HepG2 (cell line): ENCODE measurements at regions of chr14 and their contacts with region 1.

Region 1: DNA sequence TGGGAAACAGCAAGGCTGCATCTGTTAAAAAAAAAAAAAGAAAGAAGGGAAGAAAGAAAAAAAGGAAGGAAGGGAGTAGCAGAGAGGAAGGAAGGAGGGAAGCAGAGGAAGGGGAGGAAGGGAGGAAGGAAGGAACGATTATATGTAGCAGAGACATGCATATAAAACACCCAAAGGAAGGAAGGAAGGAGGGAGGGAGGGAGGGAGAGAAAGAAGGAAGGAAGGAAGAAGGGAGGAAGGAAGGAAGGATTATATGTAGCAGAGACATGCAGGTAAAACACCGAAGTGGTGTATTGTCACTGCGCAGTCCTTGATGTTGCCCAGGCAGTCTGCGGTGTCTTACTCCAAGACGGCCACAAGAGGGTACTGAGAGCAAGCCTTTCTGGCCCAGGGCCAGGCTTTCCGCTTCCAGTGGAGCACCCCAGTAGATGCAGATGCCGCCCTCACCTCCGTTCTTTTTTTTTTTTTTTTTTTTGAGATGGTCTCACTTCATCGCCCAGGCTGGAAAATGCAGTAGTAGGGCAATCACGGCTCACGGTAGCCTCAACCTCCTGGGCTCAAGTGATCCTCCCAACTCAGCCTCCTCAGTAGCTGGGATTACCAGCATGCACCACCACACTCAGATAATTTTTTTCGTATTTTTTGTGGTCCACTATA is 5.8 kb upstream of the LBHD2 start:
- DNase-seq: peak; percentile 73
- ATAC-seq: peak; percentile 34
- H3K4me3 ChIP-seq: no peak overlapping the region
- H3K27ac ChIP-seq: no peak overlapping the region
- H3K4me1 ChIP-seq: peaks cover 37% of the 10 kb centered on the region
- H3K27me3 ChIP-seq: peaks cover 2 to 33% of the 10 kb centered on the region in 2 experiments; a peak in 3 of 5 replicates
- CTCF ChIP-seq: peak; percentile 92
- EP300 ChIP-seq: no peak
- POLR2A ChIP-seq: no peak
- RAD21 ChIP-seq: peak; percentile 57; the same call in 1 of the 2 replicates

Region 2: DNA sequence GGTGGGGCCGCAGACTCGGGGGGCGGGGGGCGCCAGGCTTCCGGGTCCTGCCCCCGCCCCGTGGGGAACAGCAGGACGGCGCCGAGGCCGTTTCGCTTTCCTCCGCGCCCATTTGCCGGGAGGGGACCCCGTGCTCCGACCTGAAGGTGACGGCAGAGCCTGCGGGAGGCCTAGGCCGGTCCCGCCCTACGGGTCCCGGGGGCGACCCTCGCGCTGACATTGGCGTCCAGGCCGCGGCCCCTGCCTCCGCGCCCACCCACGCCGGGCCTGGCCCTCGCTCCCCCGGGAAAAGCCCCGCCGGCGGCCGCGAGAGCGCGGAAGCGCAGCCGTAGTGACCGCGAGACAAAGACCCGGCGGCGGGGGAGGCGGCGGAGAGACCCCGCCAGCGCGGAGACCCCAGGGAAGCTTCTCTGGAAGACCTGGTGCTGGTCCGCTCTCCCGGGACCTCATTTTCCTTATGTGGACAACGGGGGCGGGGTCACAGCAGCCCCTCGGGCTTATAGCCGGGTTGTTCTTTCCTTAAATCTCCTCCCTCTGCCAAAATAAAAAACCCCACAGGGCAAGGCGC is 522.9 kb before region 1 on chr14:
- CTCF ChIA-PET with region 1: no interaction called
- POLR2A ChIA-PET with region 1: no interaction called
- in situ Hi-C with region 1: no loop called
- intact Hi-C with region 1: no loop called
- DNase-seq: no peak
- ATAC-seq: no peak
- H3K4me3 ChIP-seq: no peak overlapping the region
- H3K27ac ChIP-seq: no peak overlapping the region
- H3K4me1 ChIP-seq: peaks cover 26% of the 10 kb centered on the region
- H3K27me3 ChIP-seq: no peaks in the 10 kb centered on the region; a peak in 1 of 5 replicates
- CTCF ChIP-seq: no peak
- EP300 ChIP-seq: no peak
- POLR2A ChIP-seq: no peak
- RAD21 ChIP-seq: no peak

Region 3: GRCh38 chr14:103057365-103058096 is 20.7 kb before region 1 on chr14 and contains the start of gene CDC42BPB:
- CTCF ChIA-PET with region 1: no interaction called
- POLR2A ChIA-PET with region 1: no interaction called
- in situ Hi-C with region 1: no loop called
- intact Hi-C with region 1: no loop called
- DNase-seq: peak; percentile 66
- ATAC-seq: peak; percentile 96
- H3K4me3 ChIP-seq: peak within 1 kb of the TSS; percentile 77 to 98 (median 91)
- H3K27ac ChIP-seq: peak within 1 kb of the TSS; percentile 63
- H3K4me1 ChIP-seq: peaks cover 42% of the 10 kb centered on the region
- H3K27me3 ChIP-seq: no peaks in the 10 kb centered on the region
- CTCF ChIP-seq: no peak
- EP300 ChIP-seq: no peak
- POLR2A ChIP-seq: peak in 1 of 2 experiments; percentile 49; a peak in 1 of 4 replicates
- RAD21 ChIP-seq: no peak
- total RNA-seq, gene CDC42BPB: 19.7 and 20.2 TPM in 2 replicates

Region 4: DNA sequence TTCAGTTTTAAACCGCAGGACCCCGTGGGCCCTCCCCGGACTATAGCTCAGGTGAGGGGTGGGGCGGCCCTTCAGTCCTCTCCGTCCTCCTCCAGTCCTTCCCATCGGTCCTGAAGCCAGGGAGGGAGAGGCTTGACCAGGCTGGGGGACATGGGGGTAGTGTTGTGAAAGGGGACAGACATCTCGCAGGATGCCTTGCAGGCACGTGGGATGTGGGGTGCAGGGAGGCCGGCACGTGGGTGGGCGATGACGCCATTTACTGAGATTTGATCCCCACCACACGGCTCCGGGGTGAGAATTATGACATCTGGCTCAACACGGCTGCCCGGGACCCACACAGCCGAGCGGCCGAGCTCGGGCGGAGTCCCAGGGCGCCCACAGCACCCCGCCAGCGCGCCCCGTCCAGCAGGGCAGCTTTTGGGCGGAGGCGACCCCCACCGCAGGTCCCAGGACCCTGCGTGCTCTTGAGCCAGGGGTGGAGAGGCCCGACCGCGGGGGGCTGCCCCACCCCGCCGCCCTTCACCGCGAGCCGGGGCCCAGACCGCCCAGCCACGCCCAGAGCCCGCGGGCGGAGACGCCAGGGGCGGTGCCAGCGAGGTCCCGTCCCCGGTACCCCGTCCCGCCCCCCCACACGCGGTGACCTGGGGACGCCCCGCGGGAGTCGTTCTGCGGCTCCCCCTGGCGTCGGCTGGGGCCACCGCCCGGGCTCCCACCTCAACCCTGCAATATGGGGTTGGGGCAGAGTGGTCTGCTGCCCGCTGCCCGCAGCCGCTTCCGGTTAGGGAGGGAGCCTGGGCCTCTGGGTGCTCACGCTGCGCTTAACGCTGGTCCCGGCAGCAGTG is 13.0 kb after region 1 on chr14:
- CTCF ChIA-PET with region 1: interaction called, 4 read pairs
- POLR2A ChIA-PET with region 1: interaction called, 11 read pairs
- in situ Hi-C with region 1: no loop called
- intact Hi-C with region 1: no loop called
- DNase-seq: no peak
- ATAC-seq: peak; percentile 12
- H3K4me3 ChIP-seq: peak overlapping the region in 2 of 3 experiments; percentile 3 to 40; a peak in 1 of 6 replicates
- H3K27ac ChIP-seq: no peak overlapping the region
- H3K4me1 ChIP-seq: peaks cover 89% of the 10 kb centered on the region
- H3K27me3 ChIP-seq: peaks cover 0 to 8% of the 10 kb centered on the region in 2 experiments; a peak in 3 of 5 replicates
- CTCF ChIP-seq: peak; percentile 66
- EP300 ChIP-seq: no peak
- POLR2A ChIP-seq: no peak
- RAD21 ChIP-seq: peak; percentile 41; the same call in 1 of the 2 replicates